Left ventricle myocardium superior (tissue), 1 donor: ENCODE measurements at regions of chr12 and their contacts with region 1.

Region 1: GRCh38 chr12:14365294-14366208 is at the start of gene ATF7IP:
- DNase-seq: peak; percentile 96
- ATAC-seq: peak; percentile 98
- total RNA-seq, gene ATF7IP: 58.5 TPM

Region 2: GRCh38 chr12:14257734-14258574 is 107.6 kb before region 1 on chr12:
- intact Hi-C with region 1: loop called (anchors 5 kb)
- DNase-seq: no peak
- ATAC-seq: peak; percentile 83

Region 3: GRCh38 chr12:14417715-14418114 is 52.2 kb after region 1 on chr12:
- intact Hi-C with region 1: loop called (anchors 10 kb)
- DNase-seq: peak; percentile 64
- ATAC-seq: peak; percentile 86

Region 4: DNA sequence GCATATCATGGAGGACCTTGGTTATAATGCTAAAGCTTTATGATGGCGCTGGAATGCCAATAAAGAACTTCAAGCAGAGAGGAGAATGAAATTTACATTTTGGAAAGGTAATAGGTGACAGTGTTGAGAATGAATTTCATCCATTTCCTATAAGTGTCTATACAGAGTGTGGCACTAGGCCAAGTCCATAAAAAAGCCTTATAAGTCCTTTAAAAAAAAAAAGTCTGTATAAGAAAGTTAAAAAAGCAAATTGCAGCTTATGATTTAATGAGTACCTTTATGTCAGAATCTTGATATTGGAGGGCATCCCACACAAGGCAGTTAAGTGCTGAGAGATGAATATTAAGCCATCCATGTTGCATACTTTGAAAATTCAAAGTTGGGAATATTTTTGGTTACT is 62.4 kb after region 1 on chr12:
- intact Hi-C with region 1: no loop called
- DNase-seq: no peak
- ATAC-seq: no peak